ENCODE measurements at regions of chr2 and their contacts with region 1.

Region 1: GRCh38 chr2:105344704-105345345 is 7.5 kb downstream of the C2orf49 start:
- DNase-seq: no peak
- ATAC-seq: peak in 5 of 8 donors; percentile 6 to 53 (median 47)
- H3K4me3 ChIP-seq: no peak overlapping the region
- H3K27ac ChIP-seq: no peak overlapping the region
- H3K4me1 ChIP-seq: peaks cover 0 to 3% (median 0%) of the 10 kb centered on the region in 9 donors
- H3K27me3 ChIP-seq: no peaks in the 10 kb centered on the region
- CTCF ChIP-seq: peak in 7 of 9 donors; percentile 35 to 61 (median 51)

Region 2: GRCh38 chr2:105287692-105288091 is 57.1 kb before region 1 on chr2:
- intact Hi-C with region 1: no loop called
- DNase-seq: no peak
- ATAC-seq: no peak
- H3K4me3 ChIP-seq: no peak overlapping the region
- H3K27ac ChIP-seq: no peak overlapping the region
- H3K4me1 ChIP-seq: no peaks in the 10 kb centered on the region
- H3K27me3 ChIP-seq: no peaks in the 10 kb centered on the region
- CTCF ChIP-seq: peak in 7 of 9 donors; percentile 22 to 49 (median 42)

Region 3: GRCh38 chr2:105373895-105374401 is 29.1 kb after region 1 on chr2:
- intact Hi-C with region 1: no loop called
- DNase-seq: no peak
- ATAC-seq: peak in 5 of 8 donors; percentile 4 to 29 (median 16)
- H3K4me3 ChIP-seq: no peak overlapping the region
- H3K27ac ChIP-seq: peak overlapping the region; percentile 50 to 93 (median 79)
- H3K4me1 ChIP-seq: peaks cover 18 to 97% (median 69%) of the 10 kb centered on the region in 9 donors
- H3K27me3 ChIP-seq: no peaks in the 10 kb centered on the region
- CTCF ChIP-seq: no peak

Region 4: DNA sequence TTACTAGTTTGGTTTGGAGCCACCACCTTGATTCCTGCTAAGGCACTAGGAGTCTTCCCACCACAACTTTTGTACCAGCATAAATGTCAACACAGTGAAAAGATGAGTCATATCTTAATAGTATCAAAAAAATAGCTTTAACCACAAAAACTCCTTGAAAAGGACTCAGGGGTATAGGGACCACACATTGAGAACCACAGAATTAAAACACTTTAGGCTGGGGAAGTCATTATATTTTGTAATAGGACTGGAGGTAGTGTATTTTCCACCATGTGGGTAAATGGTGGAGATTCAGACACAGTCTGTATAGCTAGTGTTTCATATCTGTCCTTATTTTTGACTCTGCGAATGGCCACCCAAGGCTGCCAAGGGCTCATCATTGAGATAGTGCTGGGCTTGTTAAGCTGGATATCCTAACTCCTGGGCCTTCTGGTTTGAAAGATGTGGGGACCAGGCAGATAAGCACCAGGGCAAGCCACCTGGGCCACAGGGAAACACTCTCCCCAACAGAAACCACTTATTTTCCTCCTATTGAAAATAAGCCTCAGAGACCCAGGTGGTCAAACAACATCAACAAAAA is 73.1 kb after region 1 on chr2:
- intact Hi-C with region 1: no loop called
- DNase-seq: no peak
- ATAC-seq: peak in 1 of 8 donors; percentile 1
- H3K4me3 ChIP-seq: no peak overlapping the region
- H3K27ac ChIP-seq: peak overlapping the region in 6 of 10 donors; percentile 9 to 65 (median 38)
- H3K4me1 ChIP-seq: peaks cover 0 to 90% (median 18%) of the 10 kb centered on the region in 9 donors
- H3K27me3 ChIP-seq: no peaks in the 10 kb centered on the region
- CTCF ChIP-seq: no peak

Region 5: GRCh38 chr2:105545730-105546627 is 201.2 kb after region 1 on chr2:
- intact Hi-C with region 1: loop called in 2 of 10 experiments (anchors 1 to 10 kb)
- DNase-seq: peak; percentile 59 to 74
- ATAC-seq: peak in 7 of 8 donors; percentile 51 to 78 (median 71)
- H3K4me3 ChIP-seq: no peak overlapping the region
- H3K27ac ChIP-seq: no peak overlapping the region
- H3K4me1 ChIP-seq: peaks cover 0 to 19% (median 11%) of the 10 kb centered on the region in 9 donors
- H3K27me3 ChIP-seq: peaks cover 0 to 5% (median 0%) of the 10 kb centered on the region in 7 donors
- CTCF ChIP-seq: peak; percentile 68 to 92 (median 83)

Measured in heart right ventricle (tissue), 16 donors.